ENCODE measurements at regions of chr16 and their contacts with region 1.

Region 1: GRCh38 chr16:714558-715476 is at the start of gene METRN:
- DNase-seq: peak; percentile 73 to 94 (median 89)
- ATAC-seq: peak; percentile 93
- H3K4me3 ChIP-seq: peak within 1 kb of the TSS; percentile 22 to 54
- H3K4me3 Mint-ChIP-seq: peak within 1 kb of the TSS; percentile 76
- H3K27ac ChIP-seq: no peak within 1 kb of the TSS
- H3K27ac Mint-ChIP-seq: no peak within 1 kb of the TSS
- H3K4me1 ChIP-seq: peaks cover 27% of the 10 kb centered on the region
- H3K4me1 Mint-ChIP-seq: peaks cover 24% of the 10 kb centered on the region
- H3K27me3 ChIP-seq: peaks cover 12 to 21% of the 10 kb centered on the region in 2 experiments
- H3K27me3 Mint-ChIP-seq: peaks cover 4% of the 10 kb centered on the region
- CTCF ChIP-seq: no peak
- total RNA-seq, gene METRN: 9.2 to 10.1 TPM

Region 2: GRCh38 chr16:442976-443375 is 271.8 kb before region 1 on chr16:
- CTCF ChIA-PET with region 1: no interaction called
- POLR2A ChIA-PET with region 1: no interaction called
- intact Hi-C with region 1: no loop called
- DNase-seq: no peak
- ATAC-seq: no peak
- H3K4me3 ChIP-seq: no peak overlapping the region
- H3K4me3 Mint-ChIP-seq: no peak overlapping the region
- H3K27ac ChIP-seq: no peak overlapping the region
- H3K27ac Mint-ChIP-seq: no peak overlapping the region
- H3K4me1 ChIP-seq: no peaks in the 10 kb centered on the region
- H3K4me1 Mint-ChIP-seq: peaks cover 4% of the 10 kb centered on the region
- H3K27me3 ChIP-seq: no peaks in the 10 kb centered on the region
- H3K27me3 Mint-ChIP-seq: no peaks in the 10 kb centered on the region
- CTCF ChIP-seq: no peak

Region 3: DNA sequence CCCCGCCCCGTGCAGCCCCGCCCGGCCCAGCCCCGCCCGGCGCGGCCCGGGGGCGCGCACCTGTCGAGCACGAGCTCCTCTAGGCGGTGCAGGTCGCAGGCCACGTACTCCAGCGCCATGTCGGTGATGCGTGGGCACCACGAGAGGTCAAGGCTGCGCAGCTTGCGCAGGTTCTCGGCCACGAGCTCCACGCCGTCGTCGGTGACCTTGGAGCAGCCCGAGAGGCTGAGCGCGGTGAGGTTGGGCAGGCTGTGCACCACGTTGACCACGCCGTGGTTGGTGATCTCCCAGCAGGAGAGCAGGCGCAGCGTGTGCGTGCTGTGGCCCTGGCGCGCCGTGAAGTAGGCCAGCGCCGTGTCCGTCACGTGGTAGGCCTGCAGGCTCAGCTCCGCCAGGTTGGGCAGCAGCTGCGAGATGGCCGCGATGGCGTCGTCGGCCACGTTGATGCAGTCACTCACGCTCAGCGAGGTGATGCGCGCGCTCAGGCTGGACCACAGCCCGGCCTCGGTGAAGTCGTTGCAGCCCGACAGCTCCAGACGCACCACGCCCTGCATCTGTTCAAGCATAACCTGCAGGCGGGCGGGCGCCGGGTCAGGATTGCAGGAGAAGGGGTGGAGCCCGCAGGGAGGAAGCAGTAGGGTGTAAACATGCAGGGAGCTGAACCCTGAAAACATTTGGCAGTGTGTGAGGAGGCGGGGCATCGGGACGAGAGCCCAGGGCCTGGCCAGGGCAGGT is 19.3 kb before region 1 on chr16:
- CTCF ChIA-PET with region 1: interaction called, 5 read pairs
- POLR2A ChIA-PET with region 1: interaction called, 31 read pairs
- intact Hi-C with region 1: no loop called
- DNase-seq: peak; percentile 41 to 85 (median 62)
- ATAC-seq: peak; percentile 76
- H3K4me3 ChIP-seq: peak overlapping the region; percentile 58 to 59
- H3K4me3 Mint-ChIP-seq: peak overlapping the region; percentile 77
- H3K27ac ChIP-seq: peak overlapping the region in 1 of 2 experiments; percentile 45
- H3K27ac Mint-ChIP-seq: peak overlapping the region; percentile 66
- H3K4me1 ChIP-seq: peaks cover 42% of the 10 kb centered on the region
- H3K4me1 Mint-ChIP-seq: peaks cover 28% of the 10 kb centered on the region
- H3K27me3 ChIP-seq: peaks cover 0 to 17% of the 10 kb centered on the region in 2 experiments
- H3K27me3 Mint-ChIP-seq: no peaks in the 10 kb centered on the region
- CTCF ChIP-seq: no peak

Region 4: GRCh38 chr16:728131-728889 is 13.5 kb after region 1 on chr16:
- CTCF ChIA-PET with region 1: interaction called, 353 read pairs
- POLR2A ChIA-PET with region 1: interaction called, 53 read pairs
- intact Hi-C with region 1: loop called (anchors 1 kb)
- DNase-seq: peak in 8 of 9 experiments; percentile 42 to 93 (median 68)
- ATAC-seq: peak; percentile 69
- H3K4me3 ChIP-seq: peak overlapping the region; percentile 33 to 46
- H3K4me3 Mint-ChIP-seq: peak overlapping the region; percentile 65
- H3K27ac ChIP-seq: no peak overlapping the region
- H3K27ac Mint-ChIP-seq: no peak overlapping the region
- H3K4me1 ChIP-seq: peaks cover 14% of the 10 kb centered on the region
- H3K4me1 Mint-ChIP-seq: peaks cover 12% of the 10 kb centered on the region
- H3K27me3 ChIP-seq: no peaks in the 10 kb centered on the region
- H3K27me3 Mint-ChIP-seq: no peaks in the 10 kb centered on the region
- CTCF ChIP-seq: no peak

Region 5: DNA sequence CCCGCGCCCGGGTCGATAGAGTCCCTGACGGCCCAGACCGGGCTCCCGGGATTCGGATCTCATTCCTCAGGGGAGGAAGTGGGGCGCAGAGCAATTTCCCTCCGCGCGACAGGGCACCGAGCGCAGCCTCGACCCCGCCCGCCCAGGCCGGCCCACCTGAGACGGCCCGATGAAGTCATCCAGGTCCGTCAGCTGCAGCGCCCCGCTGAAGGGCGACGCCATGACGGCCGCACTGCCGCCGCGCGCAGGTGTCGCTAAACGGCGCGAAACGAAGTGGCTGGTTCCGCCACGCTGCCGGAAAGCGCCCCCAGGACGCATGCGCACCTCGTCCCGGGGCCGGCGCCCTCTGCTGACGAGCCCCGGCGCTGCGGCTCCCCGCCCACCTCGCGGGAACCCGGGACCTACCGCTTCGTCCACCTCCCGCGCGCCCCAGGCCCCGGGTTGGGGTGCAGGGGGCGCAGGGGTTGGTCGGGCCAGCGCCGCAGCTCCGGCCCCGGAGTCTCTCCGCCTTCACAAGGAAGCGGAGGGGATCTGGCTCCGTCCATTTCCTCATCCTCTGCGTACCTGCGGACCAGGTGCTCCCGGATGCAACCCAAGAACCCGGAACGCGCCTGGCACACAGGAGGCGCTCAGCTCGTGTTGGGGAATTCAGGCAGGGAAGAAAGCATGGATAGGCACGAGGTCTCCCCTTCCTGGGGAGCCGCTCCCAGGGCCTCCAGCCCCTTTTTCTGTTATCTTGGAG is 26.1 kb after region 1 on chr16 and contains the start of gene CIAO3:
- CTCF ChIA-PET with region 1: interaction called, 353 read pairs
- POLR2A ChIA-PET with region 1: interaction called, 6 read pairs
- intact Hi-C with region 1: loop called (anchors 1 to 2 kb)
- DNase-seq: peak; percentile 80 to 98 (median 93)
- ATAC-seq: peak; percentile 96
- H3K4me3 ChIP-seq: peak within 1 kb of the TSS; percentile 85 to 90
- H3K4me3 Mint-ChIP-seq: peak within 1 kb of the TSS; percentile 82
- H3K27ac ChIP-seq: peak within 1 kb of the TSS; percentile 74 to 78
- H3K27ac Mint-ChIP-seq: peak within 1 kb of the TSS; percentile 57
- H3K4me1 ChIP-seq: peaks cover 9% of the 10 kb centered on the region
- H3K4me1 Mint-ChIP-seq: peaks cover 8% of the 10 kb centered on the region
- H3K27me3 ChIP-seq: no peaks in the 10 kb centered on the region
- H3K27me3 Mint-ChIP-seq: no peaks in the 10 kb centered on the region
- CTCF ChIP-seq: peak; percentile 93
- total RNA-seq, gene CIAO3: 25.7 to 30.0 TPM

Region 6: DNA sequence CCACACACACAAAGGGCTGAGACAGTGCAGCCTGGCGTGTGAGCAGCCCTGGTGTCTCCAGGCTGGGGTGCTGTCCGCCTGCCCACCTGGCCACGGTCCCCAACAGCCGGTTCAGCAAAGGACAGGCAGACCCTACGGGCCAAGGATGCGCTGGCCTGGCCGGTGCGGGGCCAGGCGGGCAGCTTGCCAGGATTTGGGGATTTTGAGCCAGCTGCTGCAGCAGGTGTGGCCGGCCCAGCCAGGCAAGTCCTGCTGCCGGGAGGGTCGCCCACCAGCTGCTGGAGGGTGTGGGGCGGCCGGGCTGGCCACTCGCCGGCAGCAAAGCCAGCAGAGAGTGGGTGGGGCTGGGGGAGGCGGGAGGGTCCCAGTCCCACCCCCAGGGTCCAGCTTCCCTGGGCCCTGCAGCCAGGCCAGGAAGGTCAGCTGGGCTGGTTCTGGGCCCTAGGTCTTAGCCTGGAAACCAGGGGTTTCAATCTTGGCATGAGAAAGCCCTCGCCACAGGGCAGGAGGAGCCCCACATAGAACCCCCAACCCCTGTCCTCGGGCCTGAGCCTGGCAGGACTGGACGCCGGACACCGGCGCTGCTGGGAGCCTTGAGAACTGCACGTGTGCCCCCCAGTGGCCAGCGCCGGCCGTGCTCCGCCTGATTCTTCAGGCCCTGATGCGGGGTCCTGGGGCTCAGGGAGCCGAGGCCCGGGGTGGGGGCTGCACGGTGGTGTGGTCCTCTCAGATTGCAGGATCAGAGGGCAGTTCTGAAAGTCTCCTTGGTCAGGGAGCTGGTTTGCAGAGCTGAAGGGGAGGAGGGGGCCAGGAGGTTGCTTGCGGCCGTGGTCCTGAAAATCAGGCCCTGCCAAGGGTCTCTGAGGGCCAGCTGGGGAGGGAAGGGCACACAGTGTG is 340.1 kb after region 1 on chr16:
- CTCF ChIA-PET with region 1: interaction called, 4 read pairs
- POLR2A ChIA-PET with region 1: no interaction called
- intact Hi-C with region 1: loop called in 1 of 2 experiments (anchors 2 kb)
- DNase-seq: peak in 6 of 9 experiments; percentile 24 to 68 (median 38)
- ATAC-seq: no peak
- H3K4me3 ChIP-seq: no peak overlapping the region
- H3K4me3 Mint-ChIP-seq: no peak overlapping the region
- H3K27ac ChIP-seq: no peak overlapping the region
- H3K27ac Mint-ChIP-seq: no peak overlapping the region
- H3K4me1 ChIP-seq: peaks cover 4% of the 10 kb centered on the region
- H3K4me1 Mint-ChIP-seq: no peaks in the 10 kb centered on the region
- H3K27me3 ChIP-seq: peaks cover 0 to 3% of the 10 kb centered on the region in 2 experiments
- H3K27me3 Mint-ChIP-seq: no peaks in the 10 kb centered on the region
- CTCF ChIP-seq: peak; percentile 44

Region 7: DNA sequence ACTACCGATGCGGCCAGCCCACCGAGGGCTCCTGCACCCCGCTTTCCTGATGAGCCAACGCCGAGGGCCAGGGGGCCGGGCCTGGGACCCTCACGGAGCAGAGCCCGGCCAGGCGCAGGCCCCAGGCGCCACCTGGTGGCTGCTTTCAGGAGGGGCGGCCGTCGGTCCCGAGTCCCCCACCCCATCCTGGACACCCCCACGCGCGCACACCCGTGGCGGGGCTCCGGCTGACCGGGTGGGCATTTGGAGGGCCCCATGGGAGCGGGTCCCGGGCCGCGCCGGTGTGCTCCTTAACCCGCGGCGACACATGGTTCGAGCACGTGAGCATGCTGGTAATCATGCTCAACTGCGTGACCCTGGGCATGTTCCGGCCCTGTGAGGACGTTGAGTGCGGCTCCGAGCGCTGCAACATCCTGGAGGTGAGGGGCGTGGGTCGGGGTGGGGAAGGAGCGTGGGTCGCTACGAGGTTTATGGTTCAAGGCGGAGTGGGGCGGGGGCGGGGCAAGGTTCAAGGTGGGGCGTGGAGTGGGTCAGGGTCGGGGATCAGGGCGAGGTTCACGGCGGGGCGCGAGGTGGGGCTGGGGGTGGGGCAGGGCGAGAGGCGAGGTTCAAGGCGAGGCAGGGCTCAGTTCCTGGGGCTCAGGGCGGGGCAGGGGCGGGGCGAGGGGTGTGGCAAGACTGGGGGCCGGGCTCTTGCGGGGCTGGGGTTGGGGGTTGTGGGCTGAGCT is 480.0 kb after region 1 on chr16:
- CTCF ChIA-PET with region 1: no interaction called
- POLR2A ChIA-PET with region 1: no interaction called
- intact Hi-C with region 1: loop called in 1 of 2 experiments (anchors 5 kb)
- DNase-seq: peak in 5 of 9 experiments; percentile 12 to 51 (median 35)
- ATAC-seq: no peak
- H3K4me3 ChIP-seq: no peak overlapping the region
- H3K4me3 Mint-ChIP-seq: no peak overlapping the region
- H3K27ac ChIP-seq: no peak overlapping the region
- H3K27ac Mint-ChIP-seq: no peak overlapping the region
- H3K4me1 ChIP-seq: no peaks in the 10 kb centered on the region
- H3K4me1 Mint-ChIP-seq: no peaks in the 10 kb centered on the region
- H3K27me3 ChIP-seq: no peaks in the 10 kb centered on the region
- H3K27me3 Mint-ChIP-seq: peaks cover 2% of the 10 kb centered on the region
- CTCF ChIP-seq: peak; percentile 44

Measured in CD8-positive, alpha-beta T cell (primary cell).